PC-3 (cell line): ENCODE measurements at regions of chr3 and their contacts with region 1.

Region 1: DNA sequence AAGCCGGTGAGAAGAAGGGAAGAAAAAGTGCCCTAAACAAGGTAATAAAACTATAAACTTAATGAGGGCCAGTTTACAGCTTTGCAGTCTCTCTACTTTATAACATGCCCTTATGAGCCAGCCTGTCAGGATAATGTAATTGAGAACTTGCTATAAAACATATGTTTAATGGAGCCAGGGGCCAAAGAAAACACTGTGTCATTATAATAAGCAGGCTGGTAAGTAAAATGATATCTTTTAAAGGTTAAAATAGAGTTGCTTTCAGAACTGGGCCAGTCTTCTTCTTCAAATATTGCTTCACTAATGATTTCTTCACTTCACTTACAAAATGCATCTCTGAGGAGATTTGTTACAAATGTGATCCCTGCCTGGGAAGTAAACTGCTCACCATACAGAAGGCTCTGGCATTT is 192.5 kb downstream of the SHOX2 start:
- DNase-seq: peak; percentile 34
- ATAC-seq: peak; percentile 30
- H3K4me3 ChIP-seq: no peak overlapping the region
- H3K27ac ChIP-seq: peak overlapping the region; percentile 16; the same call in 1 of the 2 replicates
- H3K4me1 ChIP-seq: peaks cover 46% of the 10 kb centered on the region
- H3K27me3 ChIP-seq: no peaks in the 10 kb centered on the region
- CTCF ChIP-seq: no peak

Region 2: DNA sequence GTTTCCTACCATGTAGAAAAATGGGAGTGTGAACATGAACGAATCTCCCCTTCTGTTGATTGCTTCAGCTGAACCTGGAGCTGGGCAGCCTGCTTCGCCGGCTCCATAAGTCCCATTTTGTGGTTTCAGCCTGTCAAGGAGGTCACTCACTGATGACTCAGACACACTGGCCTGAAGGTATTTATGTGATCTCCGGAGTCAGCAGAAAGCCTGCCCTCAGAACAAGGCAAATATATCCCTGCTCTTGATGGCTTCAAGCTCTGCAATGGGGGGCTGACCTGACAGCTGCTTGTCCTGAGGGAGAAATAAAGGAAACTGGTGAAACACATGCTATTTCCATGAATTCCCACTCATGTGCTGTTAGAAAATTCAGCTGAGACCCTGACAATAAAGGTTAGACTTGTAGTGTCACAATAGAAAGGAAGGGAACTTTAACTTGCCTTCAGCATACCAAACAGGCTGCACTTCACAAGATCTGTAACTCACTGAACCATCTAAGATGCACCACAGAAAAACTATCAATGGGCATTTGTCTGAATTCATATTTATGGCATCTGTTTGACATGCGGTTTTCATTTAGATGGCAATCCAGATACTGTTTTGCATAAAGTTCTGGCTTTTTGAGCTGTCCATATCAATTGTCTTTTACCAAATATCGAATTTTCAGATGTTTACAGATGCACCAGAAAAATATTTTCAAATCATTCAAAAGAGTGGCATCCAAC is 128.5 kb before region 1 on chr3:
- CTCF ChIA-PET with region 1: no interaction called
- POLR2A ChIA-PET with region 1: no interaction called
- intact Hi-C with region 1: loop called (anchors 2 kb)
- DNase-seq: peak; percentile 97
- ATAC-seq: peak; percentile 89
- H3K4me3 ChIP-seq: peak overlapping the region; percentile 37; the same call in 1 of the 2 replicates
- H3K27ac ChIP-seq: peak overlapping the region; percentile 83
- H3K4me1 ChIP-seq: peaks cover 66% of the 10 kb centered on the region
- H3K27me3 ChIP-seq: no peaks in the 10 kb centered on the region
- CTCF ChIP-seq: no peak

Region 3: DNA sequence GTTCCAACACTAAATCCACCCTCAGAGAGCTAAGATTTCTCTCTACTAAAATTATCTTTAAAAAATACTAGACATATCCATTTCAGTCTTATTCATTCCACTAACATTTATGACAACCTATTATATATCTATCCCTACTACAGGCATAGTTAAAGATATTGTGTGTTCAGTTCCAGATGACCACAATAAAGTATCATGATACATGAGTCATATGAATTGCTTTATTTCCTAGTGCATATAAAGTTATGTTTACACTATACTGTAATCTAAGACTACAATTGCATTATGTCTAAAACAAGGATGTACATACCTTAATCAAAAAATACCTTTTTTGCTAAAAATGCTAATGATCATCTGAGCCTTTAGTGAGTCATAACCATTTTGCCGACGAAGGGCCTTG is 173.0 kb after region 1 on chr3:
- CTCF ChIA-PET with region 1: no interaction called
- POLR2A ChIA-PET with region 1: no interaction called
- intact Hi-C with region 1: loop called (anchors 1 kb)
- DNase-seq: peak; percentile 86
- ATAC-seq: peak; percentile 97
- H3K4me3 ChIP-seq: no peak overlapping the region
- H3K27ac ChIP-seq: peak overlapping the region; percentile 75
- H3K4me1 ChIP-seq: peaks cover 31% of the 10 kb centered on the region
- H3K27me3 ChIP-seq: no peaks in the 10 kb centered on the region
- CTCF ChIP-seq: no peak

Region 4: DNA sequence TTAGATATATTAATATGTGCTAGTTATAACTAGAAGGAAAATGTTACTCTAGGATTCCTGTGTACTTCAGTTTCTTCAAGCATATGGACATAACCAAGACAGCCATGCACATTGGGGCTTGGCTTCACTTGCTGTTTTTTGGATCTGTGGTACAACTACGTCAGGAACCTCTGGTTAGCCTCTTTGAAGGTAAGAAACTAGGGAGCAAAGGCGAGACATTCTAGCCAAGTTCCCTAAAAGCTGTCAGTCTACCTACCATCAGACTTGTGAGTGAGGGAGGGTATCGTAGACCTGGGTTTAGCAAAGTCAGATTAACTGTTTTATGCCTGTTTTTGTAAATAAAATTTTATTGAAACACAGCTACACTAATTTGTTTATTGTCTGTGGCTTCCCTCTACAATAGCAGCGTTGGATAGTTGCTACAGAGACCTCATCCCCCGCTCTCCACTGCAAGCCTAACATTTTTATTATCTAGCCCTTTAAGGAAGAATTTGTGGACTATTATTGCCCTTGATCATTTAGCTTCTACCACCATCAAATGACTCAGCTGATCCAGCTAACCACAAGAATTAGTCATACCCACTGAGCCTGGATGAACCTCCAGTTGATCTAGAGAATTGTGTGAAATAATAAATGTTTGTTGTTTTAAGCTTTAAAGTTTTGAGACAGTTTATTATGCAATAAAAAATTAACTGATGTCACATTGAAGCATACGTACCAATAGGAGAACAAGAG is 254.2 kb after region 1 on chr3:
- CTCF ChIA-PET with region 1: no interaction called
- POLR2A ChIA-PET with region 1: no interaction called
- intact Hi-C with region 1: loop called (anchors 5 kb)
- DNase-seq: peak; percentile 90
- ATAC-seq: peak; percentile 94
- H3K4me3 ChIP-seq: no peak overlapping the region
- H3K27ac ChIP-seq: peak overlapping the region; percentile 49
- H3K4me1 ChIP-seq: peaks cover 26% of the 10 kb centered on the region
- H3K27me3 ChIP-seq: no peaks in the 10 kb centered on the region
- CTCF ChIP-seq: no peak

Region 5: GRCh38 chr3:158233791-158234190 is 320.0 kb after region 1 on chr3:
- CTCF ChIA-PET with region 1: no interaction called
- POLR2A ChIA-PET with region 1: no interaction called
- intact Hi-C with region 1: no loop called
- DNase-seq: no peak
- ATAC-seq: no peak
- H3K4me3 ChIP-seq: no peak overlapping the region
- H3K27ac ChIP-seq: no peak overlapping the region
- H3K4me1 ChIP-seq: no peaks in the 10 kb centered on the region
- H3K27me3 ChIP-seq: no peaks in the 10 kb centered on the region
- CTCF ChIP-seq: no peak

Region 6: GRCh38 chr3:158267015-158267414 is 353.3 kb after region 1 on chr3:
- CTCF ChIA-PET with region 1: no interaction called
- POLR2A ChIA-PET with region 1: no interaction called
- intact Hi-C with region 1: no loop called
- DNase-seq: no peak
- ATAC-seq: no peak
- H3K4me3 ChIP-seq: no peak overlapping the region
- H3K27ac ChIP-seq: no peak overlapping the region
- H3K4me1 ChIP-seq: no peaks in the 10 kb centered on the region
- H3K27me3 ChIP-seq: no peaks in the 10 kb centered on the region
- CTCF ChIP-seq: no peak

Region 7: DNA sequence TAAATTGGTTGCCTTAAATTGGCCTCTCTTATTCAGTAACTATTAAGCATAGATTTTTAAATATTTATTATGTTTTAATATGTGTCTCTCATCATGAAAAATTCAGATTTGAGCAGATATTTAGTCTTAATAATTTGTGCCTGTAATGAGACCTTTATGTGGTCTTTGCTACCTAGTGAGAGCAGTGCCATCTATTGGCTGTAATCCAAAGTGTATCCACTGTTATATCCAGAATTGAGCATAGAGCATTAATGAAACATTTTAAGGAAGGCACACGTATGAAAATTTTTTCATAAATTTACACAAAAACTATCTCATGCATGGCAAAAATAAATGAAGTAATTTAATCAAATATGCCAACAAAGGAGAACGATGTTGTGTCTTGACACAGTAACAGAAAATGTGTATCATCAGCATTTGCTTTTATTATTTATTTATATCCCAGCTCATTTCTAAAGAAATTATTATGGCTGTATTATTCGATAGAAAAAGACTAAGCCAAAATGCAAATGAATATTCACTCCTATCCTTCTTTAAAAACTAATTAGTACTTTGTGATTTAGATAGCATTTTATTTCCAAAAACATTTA is 399.7 kb after region 1 on chr3:
- CTCF ChIA-PET with region 1: no interaction called
- POLR2A ChIA-PET with region 1: no interaction called
- intact Hi-C with region 1: loop called (anchors 2 kb)
- DNase-seq: peak; percentile 56
- ATAC-seq: no peak
- H3K4me3 ChIP-seq: no peak overlapping the region
- H3K27ac ChIP-seq: no peak overlapping the region
- H3K4me1 ChIP-seq: no peaks in the 10 kb centered on the region
- H3K27me3 ChIP-seq: no peaks in the 10 kb centered on the region
- CTCF ChIP-seq: peak; percentile 64

Region 8: GRCh38 chr3:158434412-158435038 is 520.8 kb after region 1 on chr3:
- CTCF ChIA-PET with region 1: interaction called, 3 read pairs
- POLR2A ChIA-PET with region 1: no interaction called
- intact Hi-C with region 1: loop called (anchors 1 kb)
- DNase-seq: peak; percentile 73
- ATAC-seq: peak; percentile 73
- H3K4me3 ChIP-seq: no peak overlapping the region
- H3K27ac ChIP-seq: no peak overlapping the region
- H3K4me1 ChIP-seq: no peaks in the 10 kb centered on the region
- H3K27me3 ChIP-seq: no peaks in the 10 kb centered on the region
- CTCF ChIP-seq: peak; percentile 76

Region 9: DNA sequence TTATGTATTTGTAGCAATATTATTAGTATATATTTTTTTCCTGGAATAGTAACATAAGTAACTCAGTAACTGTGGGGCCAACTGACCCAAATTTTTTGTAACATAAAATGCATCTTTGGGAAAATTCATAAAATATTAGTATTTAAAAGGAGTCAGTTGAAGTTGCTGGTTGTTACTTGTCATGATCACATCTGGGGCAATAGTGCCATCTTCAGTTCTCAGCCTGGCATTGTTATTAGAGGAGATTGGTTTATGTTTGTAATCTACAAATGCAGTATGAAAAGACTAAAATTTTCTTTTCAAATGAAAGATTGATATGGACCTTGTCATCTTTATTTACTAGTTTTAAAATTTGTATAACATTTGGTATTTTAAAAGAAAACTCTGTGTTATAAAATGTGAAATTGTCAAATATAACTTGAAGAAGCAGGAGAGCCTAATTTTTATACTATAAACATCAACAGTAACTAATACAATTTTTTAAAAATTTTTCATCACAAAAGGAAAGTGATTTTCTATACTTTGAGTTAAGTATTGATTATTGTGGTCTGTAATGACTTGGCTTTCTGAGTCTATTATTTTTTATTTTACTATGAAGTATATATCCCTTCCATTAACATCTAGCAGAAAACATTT is 618.5 kb after region 1 on chr3:
- CTCF ChIA-PET with region 1: no interaction called
- POLR2A ChIA-PET with region 1: no interaction called
- intact Hi-C with region 1: loop called (anchors 5 kb)
- DNase-seq: peak; percentile 53
- ATAC-seq: no peak
- H3K4me3 ChIP-seq: no peak overlapping the region
- H3K27ac ChIP-seq: no peak overlapping the region
- H3K4me1 ChIP-seq: no peaks in the 10 kb centered on the region
- H3K27me3 ChIP-seq: no peaks in the 10 kb centered on the region
- CTCF ChIP-seq: peak; percentile 71